GM12878 (cell line): ENCODE measurements at regions of chr1 and their contacts with region 1.

Region 1: GRCh38 chr1:162357681-162358266 is 18.9 kb downstream of the SPATA46 start:
- DNase-seq: no peak
- ATAC-seq: peak; percentile 21; the same call in 2 of the 3 replicates
- H3K4me3 ChIP-seq: no peak overlapping the region
- H3K27ac ChIP-seq: no peak overlapping the region
- H3K4me1 ChIP-seq: peaks cover 17% of the 10 kb centered on the region
- H3K27me3 ChIP-seq: no peaks in the 10 kb centered on the region; a peak in 1 of 4 replicates
- CTCF ChIP-seq: peak; percentile 44 to 60 (median 53); a peak in 5 of 6 replicates
- EP300 ChIP-seq: no peak
- POLR2A ChIP-seq: no peak
- RAD21 ChIP-seq: peak; percentile 60

Region 2: GRCh38 chr1:162056043-162056442 is 301.7 kb before region 1 on chr1:
- CTCF ChIA-PET with region 1: interaction called, 12 read pairs
- POLR2A ChIA-PET with region 1: no interaction called
- RAD21 ChIA-PET with region 1: no interaction called
- SMC1A ChIA-PET with region 1: no interaction called
- in situ Hi-C with region 1: no loop called
- intact Hi-C with region 1: no loop called
- DNase-seq: peak; percentile 17
- ATAC-seq: peak; percentile 99
- H3K4me3 ChIP-seq: no peak overlapping the region
- H3K27ac ChIP-seq: no peak overlapping the region
- H3K4me1 ChIP-seq: no peaks in the 10 kb centered on the region
- H3K27me3 ChIP-seq: peaks cover 0 to 2% of the 10 kb centered on the region in 2 experiments; a peak in 3 of 4 replicates
- CTCF ChIP-seq: peak; percentile 82 to 90 (median 88)
- EP300 ChIP-seq: no peak
- POLR2A ChIP-seq: no peak
- RAD21 ChIP-seq: peak; percentile 90

Region 3: GRCh38 chr1:162270016-162270770 is 87.6 kb before region 1 on chr1:
- CTCF ChIA-PET with region 1: no interaction called
- POLR2A ChIA-PET with region 1: no interaction called
- RAD21 ChIA-PET with region 1: no interaction called
- SMC1A ChIA-PET with region 1: no interaction called
- in situ Hi-C with region 1: no loop called
- intact Hi-C with region 1: no loop called
- DNase-seq: no peak
- ATAC-seq: no peak
- H3K4me3 ChIP-seq: no peak overlapping the region
- H3K27ac ChIP-seq: no peak overlapping the region
- H3K4me1 ChIP-seq: 0 out of 2 replicates have a peak, but pooled peaks cover 3% of the 10 kb centered on the region
- H3K27me3 ChIP-seq: no peaks in the 10 kb centered on the region
- CTCF ChIP-seq: no peak
- EP300 ChIP-seq: no peak
- POLR2A ChIP-seq: no peak
- RAD21 ChIP-seq: no peak

Region 4: GRCh38 chr1:162372159-162373071 is 14.6 kb after region 1 on chr1:
- CTCF ChIA-PET with region 1: interaction called, 15 read pairs
- POLR2A ChIA-PET with region 1: no interaction called
- RAD21 ChIA-PET with region 1: interaction called, 4 read pairs
- SMC1A ChIA-PET with region 1: interaction called, 6 read pairs
- in situ Hi-C with region 1: no loop called
- intact Hi-C with region 1: no loop called
- DNase-seq: no peak
- ATAC-seq: peak; percentile 50
- H3K4me3 ChIP-seq: no peak overlapping the region
- H3K27ac ChIP-seq: no peak overlapping the region
- H3K4me1 ChIP-seq: no peaks in the 10 kb centered on the region
- H3K27me3 ChIP-seq: no peaks in the 10 kb centered on the region
- CTCF ChIP-seq: no peak
- EP300 ChIP-seq: no peak
- POLR2A ChIP-seq: no peak
- RAD21 ChIP-seq: no peak

Region 5: GRCh38 chr1:162391790-162392563 is 34.2 kb after region 1 on chr1:
- CTCF ChIA-PET with region 1: interaction called, 126 read pairs
- POLR2A ChIA-PET with region 1: no interaction called
- RAD21 ChIA-PET with region 1: interaction called, 83 read pairs
- SMC1A ChIA-PET with region 1: interaction called, 84 read pairs
- in situ Hi-C with region 1: no loop called
- intact Hi-C with region 1: loop called (anchors 1 kb)
- DNase-seq: no peak
- ATAC-seq: peak; percentile 66
- H3K4me3 ChIP-seq: no peak overlapping the region
- H3K27ac ChIP-seq: no peak overlapping the region
- H3K4me1 ChIP-seq: 0 out of 2 replicates have a peak, but pooled peaks cover 4% of the 10 kb centered on the region
- H3K27me3 ChIP-seq: peaks cover 0 to 5% of the 10 kb centered on the region in 2 experiments; a peak in 2 of 4 replicates
- CTCF ChIP-seq: peak; percentile 71 to 75 (median 74)
- EP300 ChIP-seq: no peak
- POLR2A ChIP-seq: no peak
- RAD21 ChIP-seq: peak; percentile 77

Region 6: DNA sequence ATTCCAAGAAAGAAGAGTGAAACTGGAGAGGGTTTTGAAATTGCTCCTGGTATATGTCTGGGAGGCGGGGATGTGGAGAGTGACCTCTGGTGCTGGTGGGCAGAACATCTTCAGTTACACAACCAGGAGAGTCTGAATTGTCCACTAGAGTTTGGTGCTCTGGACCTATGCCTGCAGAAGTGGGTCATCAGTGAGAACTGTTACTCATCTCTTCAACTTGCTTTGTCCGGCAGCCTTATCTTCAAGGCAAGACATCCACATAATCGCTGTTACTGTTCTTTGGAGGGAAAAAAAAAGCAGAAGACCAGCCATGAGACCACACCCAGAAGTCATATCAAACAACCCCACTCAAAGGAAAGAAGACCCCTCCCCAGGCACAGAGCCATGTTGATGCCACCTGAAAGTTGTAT is 39.3 kb after region 1 on chr1:
- CTCF ChIA-PET with region 1: interaction called, 126 read pairs
- POLR2A ChIA-PET with region 1: no interaction called
- RAD21 ChIA-PET with region 1: interaction called, 83 read pairs
- SMC1A ChIA-PET with region 1: interaction called, 84 read pairs
- in situ Hi-C with region 1: no loop called
- intact Hi-C with region 1: loop called (anchors 1 kb)
- DNase-seq: no peak
- ATAC-seq: no peak; the same call in 2 of the 3 replicates
- H3K4me3 ChIP-seq: no peak overlapping the region
- H3K27ac ChIP-seq: no peak overlapping the region
- H3K4me1 ChIP-seq: no peaks in the 10 kb centered on the region
- H3K27me3 ChIP-seq: peaks cover 0 to 5% of the 10 kb centered on the region in 2 experiments; a peak in 3 of 4 replicates
- CTCF ChIP-seq: no peak
- EP300 ChIP-seq: no peak
- POLR2A ChIP-seq: no peak
- RAD21 ChIP-seq: no peak

Region 7: DNA sequence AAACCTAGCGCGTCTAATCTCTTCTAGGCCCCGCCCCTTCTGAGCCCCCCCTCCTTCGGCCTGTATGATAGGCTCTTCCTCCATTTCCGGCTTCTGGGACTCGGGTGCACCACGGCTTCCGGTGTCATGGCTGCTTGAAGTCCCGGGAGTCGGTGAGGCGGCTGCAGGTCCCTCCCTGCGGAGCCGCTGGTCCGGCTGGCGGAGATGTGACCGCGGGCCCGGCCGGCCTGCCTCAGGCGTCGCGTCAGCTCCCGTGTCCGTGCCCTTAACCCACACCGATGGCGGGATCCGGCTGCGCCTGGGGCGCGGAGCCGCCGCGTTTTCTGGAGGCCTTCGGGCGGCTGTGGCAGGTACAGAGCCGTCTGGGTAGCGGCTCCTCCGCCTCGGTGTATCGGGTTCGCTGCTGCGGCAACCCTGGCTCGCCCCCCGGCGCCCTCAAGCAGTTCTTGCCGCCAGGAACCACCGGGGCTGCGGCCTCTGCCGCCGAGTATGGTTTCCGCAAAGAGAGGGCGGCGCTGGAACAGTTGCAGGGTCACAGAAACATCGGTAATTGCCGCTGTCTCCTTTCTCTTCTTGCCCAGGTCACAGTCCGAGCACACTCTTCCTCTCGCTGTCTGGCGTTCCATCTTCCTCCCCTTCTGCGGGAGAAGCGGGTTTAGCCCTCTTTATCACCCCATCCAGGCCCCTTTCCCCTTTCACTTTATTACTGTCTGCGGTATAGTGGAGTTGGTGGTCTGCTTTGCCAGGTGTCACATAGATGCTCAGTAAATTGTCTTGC is 140.1 kb after region 1 on chr1 and contains the start of gene UHMK1:
- CTCF ChIA-PET with region 1: interaction called, 4 read pairs
- POLR2A ChIA-PET with region 1: no interaction called
- RAD21 ChIA-PET with region 1: no interaction called
- SMC1A ChIA-PET with region 1: interaction called, 4 read pairs
- in situ Hi-C with region 1: no loop called
- intact Hi-C with region 1: loop called (anchors 5 kb)
- DNase-seq: no peak
- ATAC-seq: peak; percentile 98
- H3K4me3 ChIP-seq: peak within 1 kb of the TSS; percentile 92
- H3K27ac ChIP-seq: peak within 1 kb of the TSS; percentile 90
- H3K4me1 ChIP-seq: no peaks in the 10 kb centered on the region
- H3K27me3 ChIP-seq: no peaks in the 10 kb centered on the region
- CTCF ChIP-seq: no peak
- EP300 ChIP-seq: no peak
- POLR2A ChIP-seq: peak; percentile 93
- RAD21 ChIP-seq: no peak
- polyA plus RNA-seq, gene UHMK1: 5.7 to 12.9 TPM

Region 8: DNA sequence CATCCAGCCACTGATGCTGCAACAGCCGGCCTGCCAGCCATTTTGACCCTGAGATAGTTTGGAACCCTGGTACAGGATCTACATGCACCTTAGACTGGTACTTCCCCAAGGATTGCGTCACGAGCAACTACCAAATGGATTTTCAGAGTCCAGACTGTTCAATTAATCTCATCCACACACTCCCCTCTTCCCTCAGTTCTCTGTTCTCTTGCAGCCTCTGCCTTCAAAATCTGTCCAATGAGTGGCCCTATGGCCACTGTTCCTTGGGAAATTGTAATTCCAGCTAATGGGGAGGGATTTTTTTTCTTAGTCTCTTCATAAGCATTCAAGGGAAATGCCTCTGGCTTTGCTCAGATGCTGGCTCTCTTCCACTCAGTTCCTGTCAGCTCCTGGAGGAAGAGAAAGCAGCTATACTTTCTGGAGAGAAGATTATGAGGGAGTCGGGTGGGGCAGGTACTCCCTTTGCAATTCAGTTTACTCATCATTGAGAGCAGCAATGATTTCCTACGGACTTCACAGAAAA is 183.9 kb after region 1 on chr1:
- CTCF ChIA-PET with region 1: no interaction called
- POLR2A ChIA-PET with region 1: no interaction called
- RAD21 ChIA-PET with region 1: no interaction called
- SMC1A ChIA-PET with region 1: no interaction called
- in situ Hi-C with region 1: no loop called
- intact Hi-C with region 1: no loop called
- DNase-seq: no peak
- ATAC-seq: no peak
- H3K4me3 ChIP-seq: no peak overlapping the region
- H3K27ac ChIP-seq: no peak overlapping the region
- H3K4me1 ChIP-seq: no peaks in the 10 kb centered on the region
- H3K27me3 ChIP-seq: no peaks in the 10 kb centered on the region
- CTCF ChIP-seq: no peak
- EP300 ChIP-seq: no peak
- POLR2A ChIP-seq: no peak
- RAD21 ChIP-seq: no peak

Region 9: GRCh38 chr1:162627662-162628296 is 270.0 kb after region 1 on chr1:
- CTCF ChIA-PET with region 1: interaction called, 10 read pairs
- POLR2A ChIA-PET with region 1: interaction called, 3 read pairs
- RAD21 ChIA-PET with region 1: interaction called, 3 read pairs
- SMC1A ChIA-PET with region 1: interaction called, 4 read pairs
- in situ Hi-C with region 1: no loop called
- intact Hi-C with region 1: no loop called
- DNase-seq: no peak
- ATAC-seq: peak; percentile 53
- H3K4me3 ChIP-seq: no peak overlapping the region
- H3K27ac ChIP-seq: no peak overlapping the region
- H3K4me1 ChIP-seq: peaks cover 27% of the 10 kb centered on the region
- H3K27me3 ChIP-seq: no peaks in the 10 kb centered on the region
- CTCF ChIP-seq: peak; percentile 31 to 47 (median 47)
- EP300 ChIP-seq: no peak
- POLR2A ChIP-seq: no peak
- RAD21 ChIP-seq: peak; percentile 49